ENCODE measurements at regions of chr2 and their contacts with region 1.

Region 1: DNA sequence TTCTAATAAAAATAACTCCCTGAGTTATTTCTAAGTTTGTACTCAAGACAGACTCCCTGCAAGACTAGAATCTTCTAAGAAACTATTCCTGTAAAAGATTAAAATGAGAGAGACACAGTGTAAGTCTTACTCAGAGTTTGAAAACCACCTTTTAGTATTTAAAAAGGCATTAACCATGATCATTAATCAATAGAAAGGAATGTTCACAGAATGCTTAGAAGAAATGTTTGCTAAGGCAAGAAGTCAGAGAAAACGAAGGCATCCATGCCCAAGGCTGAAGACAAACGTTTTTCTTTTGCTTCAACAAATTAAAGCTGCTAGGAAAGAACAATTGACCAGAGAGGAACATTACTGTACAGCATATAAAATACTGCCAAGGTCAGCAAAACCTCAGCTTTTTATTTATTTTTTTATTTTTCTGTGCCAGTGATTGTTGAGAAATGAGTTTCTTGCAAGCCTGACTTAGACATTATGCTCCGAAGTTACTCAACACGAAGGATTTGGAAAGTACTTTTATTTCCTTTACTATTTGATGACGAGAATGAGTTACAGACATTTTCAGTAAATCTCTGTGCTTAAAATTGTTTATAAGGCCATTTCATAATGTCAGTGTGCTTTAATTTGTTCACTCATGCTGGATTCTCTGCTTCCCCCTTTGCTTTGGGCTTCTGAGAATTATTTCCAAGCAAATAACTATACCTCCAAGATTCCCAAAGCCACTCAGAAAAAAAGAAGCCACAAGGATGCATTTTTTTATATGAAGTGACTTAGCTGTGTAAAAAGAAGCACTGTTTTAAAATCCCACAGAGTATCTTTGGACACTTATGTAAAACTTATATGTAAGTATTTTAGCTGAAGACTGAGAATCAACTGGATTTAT is 20.5 kb downstream of the RND3 start:
- DNase-seq: peak; percentile 86
- ATAC-seq: peak; percentile 36
- H3K4me3 ChIP-seq: no peak overlapping the region
- H3K27ac ChIP-seq: peak overlapping the region; percentile 42; the same call in 1 of the 2 replicates
- H3K4me1 ChIP-seq: peaks cover 5% of the 10 kb centered on the region
- H3K27me3 ChIP-seq: no peaks in the 10 kb centered on the region
- CTCF ChIP-seq: no peak
- POLR2A ChIP-seq: peak; percentile 2; the same call in 1 of the 2 replicates
- RAD21 ChIP-seq: no peak

Region 2: DNA sequence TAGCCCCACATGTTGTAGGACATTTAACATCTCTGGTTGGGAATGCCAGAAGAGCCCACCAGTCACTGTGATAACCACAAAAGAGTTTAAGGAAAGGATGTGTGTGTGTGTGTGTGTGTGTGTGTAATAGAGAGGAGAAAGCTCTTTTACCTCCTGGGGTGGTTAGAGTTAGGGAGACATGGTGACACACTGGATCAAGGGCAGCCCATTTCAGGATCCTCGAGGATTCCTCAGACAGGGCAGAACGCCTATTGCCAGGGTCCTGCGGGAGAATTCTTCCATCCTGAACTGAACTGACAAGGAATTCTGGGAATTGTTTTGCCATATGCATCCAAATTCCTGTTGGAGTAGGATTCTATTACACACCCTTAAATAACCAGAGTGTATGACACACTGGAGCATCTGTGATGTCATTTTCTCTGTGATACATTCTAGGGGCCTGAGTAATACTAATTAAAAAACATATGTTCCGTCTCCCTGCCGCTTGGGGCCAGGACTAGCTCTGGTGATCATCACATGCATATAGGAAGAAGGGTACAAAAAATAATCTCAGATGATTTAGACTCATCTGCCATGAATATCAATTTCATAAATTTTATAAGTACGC is 723.0 kb before region 1 on chr2:
- CTCF ChIA-PET with region 1: no interaction called
- POLR2A ChIA-PET with region 1: no interaction called
- dilution Hi-C with region 1: no loop called
- in situ Hi-C with region 1: loop called (anchors 25 kb)
- intact Hi-C with region 1: loop called (anchors 2 kb)
- DNase-seq: peak; percentile 97
- ATAC-seq: peak; percentile 73
- H3K4me3 ChIP-seq: no peak overlapping the region
- H3K27ac ChIP-seq: peak overlapping the region; percentile 98
- H3K4me1 ChIP-seq: peaks cover 36% of the 10 kb centered on the region
- H3K27me3 ChIP-seq: no peaks in the 10 kb centered on the region
- CTCF ChIP-seq: peak; percentile 48
- POLR2A ChIP-seq: no peak
- RAD21 ChIP-seq: peak; percentile 53

Region 3: DNA sequence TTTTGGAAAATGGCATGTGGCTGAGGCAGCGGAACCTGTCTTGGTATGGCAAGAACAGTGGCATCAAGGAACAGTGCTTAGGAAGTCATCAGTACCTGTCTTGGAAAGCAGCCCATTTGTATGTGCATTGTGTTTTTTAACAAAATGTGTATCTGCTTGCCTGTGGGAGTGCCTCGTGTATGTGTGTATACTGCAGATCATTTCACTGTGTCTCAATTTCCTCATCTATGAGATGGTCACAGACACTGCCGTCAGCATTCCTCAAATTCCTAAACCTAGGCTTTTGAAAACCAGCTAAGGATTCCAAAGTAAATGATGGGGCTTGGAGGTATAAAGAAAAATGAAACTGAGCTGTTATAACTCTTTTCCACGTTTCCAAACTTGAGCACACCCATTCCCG is 420.8 kb before region 1 on chr2:
- CTCF ChIA-PET with region 1: no interaction called
- POLR2A ChIA-PET with region 1: no interaction called
- dilution Hi-C with region 1: no loop called
- in situ Hi-C with region 1: no loop called
- intact Hi-C with region 1: loop called (anchors 10 kb)
- DNase-seq: peak; percentile 52
- ATAC-seq: peak; percentile 61
- H3K4me3 ChIP-seq: no peak overlapping the region
- H3K27ac ChIP-seq: no peak overlapping the region
- H3K4me1 ChIP-seq: peaks cover 6% of the 10 kb centered on the region; the same call in 1 of the 2 replicates
- H3K27me3 ChIP-seq: no peaks in the 10 kb centered on the region
- CTCF ChIP-seq: no peak
- POLR2A ChIP-seq: no peak
- RAD21 ChIP-seq: no peak

Region 4: GRCh38 chr2:150212722-150213171 is 254.2 kb before region 1 on chr2:
- CTCF ChIA-PET with region 1: no interaction called
- POLR2A ChIA-PET with region 1: no interaction called
- dilution Hi-C with region 1: no loop called
- in situ Hi-C with region 1: no loop called
- intact Hi-C with region 1: loop called (anchors 5 kb)
- DNase-seq: peak; percentile 77
- ATAC-seq: peak; percentile 28
- H3K4me3 ChIP-seq: no peak overlapping the region
- H3K27ac ChIP-seq: peak overlapping the region; percentile 60; the same call in 1 of the 2 replicates
- H3K4me1 ChIP-seq: peaks cover 18% of the 10 kb centered on the region
- H3K27me3 ChIP-seq: no peaks in the 10 kb centered on the region
- CTCF ChIP-seq: no peak
- POLR2A ChIP-seq: no peak
- RAD21 ChIP-seq: no peak

Region 5: DNA sequence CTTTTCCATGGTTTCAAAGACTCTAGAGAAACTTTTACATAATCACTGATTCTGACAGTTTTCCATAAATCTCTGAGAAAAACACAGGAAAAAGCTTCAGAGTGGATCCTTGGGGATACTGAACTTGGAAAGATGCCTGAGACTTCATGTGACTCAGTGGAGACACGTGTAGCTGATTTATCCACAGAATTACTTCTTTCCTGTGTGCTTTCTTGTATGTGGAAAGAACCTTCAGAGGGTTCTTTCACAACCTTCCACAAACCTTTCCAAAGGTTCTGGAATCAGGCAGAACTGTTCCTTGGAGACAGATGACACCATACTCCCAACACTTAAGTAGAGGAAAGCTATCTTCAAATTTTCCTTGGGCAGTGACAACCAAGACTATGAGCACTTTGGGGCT is 186.8 kb before region 1 on chr2:
- CTCF ChIA-PET with region 1: no interaction called
- POLR2A ChIA-PET with region 1: no interaction called
- dilution Hi-C with region 1: no loop called
- in situ Hi-C with region 1: no loop called
- intact Hi-C with region 1: loop called (anchors 5 kb)
- DNase-seq: peak; percentile 87
- ATAC-seq: peak; percentile 52
- H3K4me3 ChIP-seq: no peak overlapping the region
- H3K27ac ChIP-seq: peak overlapping the region; percentile 33; the same call in 1 of the 2 replicates
- H3K4me1 ChIP-seq: peaks cover 4% of the 10 kb centered on the region
- H3K27me3 ChIP-seq: no peaks in the 10 kb centered on the region
- CTCF ChIP-seq: no peak
- POLR2A ChIP-seq: no peak
- RAD21 ChIP-seq: no peak

Measured in IMR-90 (cell line).